GM23248 (cell line): ENCODE measurements at regions of chr1 and their contacts with region 1.

Region 1: GRCh38 chr1:8567146-8567545 is 249.2 kb downstream of the SLC45A1 start:
- DNase-seq: peak; percentile 29
- H3K4me3 ChIP-seq: no peak overlapping the region
- H3K27ac ChIP-seq: no peak overlapping the region
- H3K4me1 ChIP-seq: peaks cover 33% of the 10 kb centered on the region
- H3K27me3 ChIP-seq: no peaks in the 10 kb centered on the region

Region 2: GRCh38 chr1:8718850-8719361 is 151.8 kb after region 1 on chr1:
- in situ Hi-C with region 1: loop called (anchors 5 kb)
- DNase-seq: peak; percentile 11
- H3K4me3 ChIP-seq: no peak overlapping the region
- H3K27ac ChIP-seq: no peak overlapping the region
- H3K4me1 ChIP-seq: peaks cover 14% of the 10 kb centered on the region
- H3K27me3 ChIP-seq: no peaks in the 10 kb centered on the region

Region 3: GRCh38 chr1:8878448-8879347 is 311.6 kb after region 1 on chr1 and contains the start of gene ENO1:
- in situ Hi-C with region 1: no loop called
- DNase-seq: peak; percentile 99
- H3K4me3 ChIP-seq: peak within 1 kb of the TSS; percentile 85
- H3K27ac ChIP-seq: peak within 1 kb of the TSS; percentile 94
- H3K4me1 ChIP-seq: peaks cover 44% of the 10 kb centered on the region
- H3K27me3 ChIP-seq: no peaks in the 10 kb centered on the region
- total RNA-seq, gene ENO1: 1,781 and 2,185 TPM in 2 replicates